ENCODE measurements at regions of chr17 and their contacts with region 1.

Region 1: DNA sequence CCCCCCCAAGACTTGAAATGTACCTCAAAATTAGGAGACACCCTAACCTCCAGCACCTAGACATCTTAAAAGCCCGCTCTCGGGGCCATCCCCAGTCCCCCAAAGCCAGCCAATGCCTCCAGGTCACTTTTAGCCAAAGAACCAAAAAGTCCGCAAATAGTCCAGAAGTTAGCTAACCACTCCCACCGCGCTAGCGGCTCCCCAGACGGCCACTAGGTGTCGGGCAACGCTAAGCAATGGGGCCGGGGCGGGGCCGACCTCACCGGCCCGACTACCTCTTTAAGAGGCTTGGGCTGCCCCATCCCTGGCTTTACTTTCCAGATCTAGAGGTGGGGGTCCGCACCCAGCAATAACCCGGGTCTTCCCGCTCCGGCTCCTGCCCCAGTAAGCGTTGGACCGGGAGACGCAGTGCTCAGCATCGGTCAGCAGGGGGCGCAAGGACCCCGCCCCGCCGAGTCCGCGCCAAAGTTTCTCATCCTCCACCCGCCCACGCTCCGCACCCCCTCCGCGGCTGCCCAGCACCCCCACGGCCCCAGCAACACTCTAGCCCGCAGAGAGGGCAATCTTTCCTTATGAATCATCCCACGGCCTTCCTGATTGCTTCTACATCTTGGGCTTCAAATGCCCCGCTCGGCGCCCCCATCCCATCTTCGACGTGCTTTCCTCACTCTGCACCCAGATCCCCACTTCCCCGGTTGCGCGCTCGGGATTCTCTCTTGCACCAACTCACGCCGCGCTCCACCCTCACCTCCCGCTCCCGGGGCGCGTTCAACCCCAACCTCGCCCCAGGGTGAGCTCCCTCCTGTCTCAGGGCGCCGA is 765 bp downstream of the COL1A1 start:
- DNase-seq: peak; percentile 70 to 83 (median 75)
- H3K4me3 ChIP-seq: peak overlapping the region; percentile 59
- H3K4me3 Mint-ChIP-seq: peak overlapping the region; percentile 75 to 90 (median 80)
- H3K27ac ChIP-seq: no peak overlapping the region
- H3K27ac Mint-ChIP-seq: peak overlapping the region in 7 of 8 donors; percentile 14 to 97 (median 87)
- H3K4me1 ChIP-seq: peaks cover 17% of the 10 kb centered on the region
- H3K4me1 Mint-ChIP-seq: peaks cover 16 to 29% (median 16%) of the 10 kb centered on the region in 3 donors
- H3K27me3 ChIP-seq: peaks cover 25% of the 10 kb centered on the region
- H3K27me3 Mint-ChIP-seq: peaks cover 45 to 51% of the 10 kb centered on the region in 2 donors

Region 2: DNA sequence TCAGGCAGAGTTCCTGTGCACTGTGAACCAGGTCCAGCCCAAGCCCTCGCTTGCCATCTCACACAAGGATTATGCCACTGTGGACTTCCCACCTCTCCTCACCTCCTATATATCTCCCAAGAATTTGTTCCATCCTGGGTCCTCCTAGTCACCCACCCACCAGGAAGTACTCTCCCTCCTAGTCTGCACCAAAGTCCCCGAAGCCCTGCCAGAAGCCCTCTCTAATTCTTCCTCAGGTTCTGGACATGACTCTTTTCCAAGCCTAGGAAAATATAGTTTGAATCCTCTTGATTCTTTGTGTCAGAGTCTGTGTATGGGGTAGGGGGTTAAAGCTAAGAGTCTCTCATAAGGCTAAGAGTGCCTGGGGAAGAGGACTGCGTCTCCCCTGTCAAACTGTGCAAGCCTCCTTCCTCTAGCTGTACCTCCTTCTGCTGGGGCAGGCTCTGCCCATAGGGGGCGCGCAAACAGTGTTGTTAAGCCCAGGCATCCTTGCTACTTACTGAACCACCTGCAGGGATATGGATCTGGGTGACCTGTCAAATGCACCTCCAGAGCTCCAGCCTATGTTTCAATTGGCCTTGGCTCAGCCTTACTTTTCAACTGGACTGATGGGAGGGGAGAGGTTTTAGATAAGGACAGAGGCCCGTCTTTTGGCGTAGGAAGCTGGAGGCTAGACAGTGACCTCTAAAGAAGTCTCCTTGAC is 248.3 kb before region 1 on chr17:
- CTCF ChIA-PET with region 1: no interaction called
- POLR2A ChIA-PET with region 1: no interaction called
- DNase-seq: peak; percentile 65 to 85 (median 69)
- H3K4me3 ChIP-seq: no peak overlapping the region
- H3K4me3 Mint-ChIP-seq: no peak overlapping the region
- H3K27ac ChIP-seq: no peak overlapping the region
- H3K27ac Mint-ChIP-seq: no peak overlapping the region
- H3K4me1 ChIP-seq: no peaks in the 10 kb centered on the region
- H3K4me1 Mint-ChIP-seq: no peaks in the 10 kb centered on the region
- H3K27me3 ChIP-seq: peaks cover 31% of the 10 kb centered on the region
- H3K27me3 Mint-ChIP-seq: peaks cover 39 to 77% of the 10 kb centered on the region in 2 donors

Region 3: GRCh38 chr17:50213026-50214022 is 12.7 kb after region 1 on chr17:
- CTCF ChIA-PET with region 1: interaction called, 43 read pairs
- POLR2A ChIA-PET with region 1: no interaction called
- DNase-seq: peak in 4 of 5 donors; percentile 13 to 66 (median 56)
- H3K4me3 ChIP-seq: no peak overlapping the region
- H3K4me3 Mint-ChIP-seq: no peak overlapping the region
- H3K27ac ChIP-seq: no peak overlapping the region
- H3K27ac Mint-ChIP-seq: peak overlapping the region in 4 of 8 donors; percentile 10 to 29 (median 19)
- H3K4me1 ChIP-seq: peaks cover 8% of the 10 kb centered on the region
- H3K4me1 Mint-ChIP-seq: peaks cover 6 to 12% (median 11%) of the 10 kb centered on the region in 3 donors
- H3K27me3 ChIP-seq: peaks cover 4% of the 10 kb centered on the region
- H3K27me3 Mint-ChIP-seq: peaks cover 17 to 48% of the 10 kb centered on the region in 2 donors

Region 4: GRCh38 chr17:50269477-50270434 is 69.1 kb after region 1 on chr17:
- CTCF ChIA-PET with region 1: interaction called, 59 read pairs
- POLR2A ChIA-PET with region 1: no interaction called
- DNase-seq: peak; percentile 26 to 63 (median 37)
- H3K4me3 ChIP-seq: no peak overlapping the region
- H3K4me3 Mint-ChIP-seq: no peak overlapping the region
- H3K27ac ChIP-seq: no peak overlapping the region
- H3K27ac Mint-ChIP-seq: no peak overlapping the region
- H3K4me1 ChIP-seq: peaks cover 4% of the 10 kb centered on the region
- H3K4me1 Mint-ChIP-seq: peaks cover 4 to 6% (median 6%) of the 10 kb centered on the region in 3 donors
- H3K27me3 ChIP-seq: peaks cover 5% of the 10 kb centered on the region
- H3K27me3 Mint-ChIP-seq: peaks cover 5 to 23% of the 10 kb centered on the region in 2 donors

Region 5: GRCh38 chr17:50283246-50283645 is 82.6 kb after region 1 on chr17:
- CTCF ChIA-PET with region 1: interaction called, 12 read pairs
- POLR2A ChIA-PET with region 1: no interaction called
- DNase-seq: no peak
- H3K4me3 ChIP-seq: no peak overlapping the region
- H3K4me3 Mint-ChIP-seq: no peak overlapping the region
- H3K27ac ChIP-seq: no peak overlapping the region
- H3K27ac Mint-ChIP-seq: peak overlapping the region in 1 of 8 donors; percentile 47
- H3K4me1 ChIP-seq: no peaks in the 10 kb centered on the region
- H3K4me1 Mint-ChIP-seq: peaks cover 0 to 4% (median 3%) of the 10 kb centered on the region in 3 donors
- H3K27me3 ChIP-seq: no peaks in the 10 kb centered on the region
- H3K27me3 Mint-ChIP-seq: peaks cover 20 to 58% of the 10 kb centered on the region in 2 donors

Region 6: GRCh38 chr17:50297407-50297865 is 96.8 kb after region 1 on chr17:
- CTCF ChIA-PET with region 1: interaction called, 82 read pairs
- POLR2A ChIA-PET with region 1: no interaction called
- DNase-seq: peak; percentile 65 to 84 (median 66)
- H3K4me3 ChIP-seq: no peak overlapping the region
- H3K4me3 Mint-ChIP-seq: no peak overlapping the region
- H3K27ac ChIP-seq: no peak overlapping the region
- H3K27ac Mint-ChIP-seq: peak overlapping the region in 1 of 8 donors; percentile 43
- H3K4me1 ChIP-seq: no peaks in the 10 kb centered on the region
- H3K4me1 Mint-ChIP-seq: no peaks in the 10 kb centered on the region
- H3K27me3 ChIP-seq: peaks cover 9% of the 10 kb centered on the region
- H3K27me3 Mint-ChIP-seq: peaks cover 12 to 19% of the 10 kb centered on the region in 2 donors

Region 7: DNA sequence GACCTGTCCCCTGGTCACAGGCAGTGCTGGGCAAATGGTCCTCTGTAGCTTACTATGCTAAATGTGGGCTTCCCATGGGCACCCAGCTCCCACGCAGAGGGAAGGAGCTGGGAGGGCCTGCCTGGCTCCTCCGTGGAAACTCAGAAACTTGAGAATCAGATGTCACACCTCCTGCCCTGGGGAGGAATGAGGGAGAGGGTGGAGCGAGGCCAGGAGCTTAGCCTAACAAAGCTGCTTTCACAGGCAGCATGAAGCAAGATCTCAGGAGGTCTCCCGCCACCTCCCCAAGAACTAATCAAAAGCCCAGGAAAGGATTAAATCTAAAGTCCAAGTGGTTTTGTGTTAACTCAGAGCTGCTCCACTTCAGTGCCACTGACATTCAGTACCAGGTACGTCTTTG is 111.6 kb after region 1 on chr17:
- CTCF ChIA-PET with region 1: no interaction called
- POLR2A ChIA-PET with region 1: no interaction called
- DNase-seq: no peak
- H3K4me3 ChIP-seq: no peak overlapping the region
- H3K4me3 Mint-ChIP-seq: no peak overlapping the region
- H3K27ac ChIP-seq: no peak overlapping the region
- H3K27ac Mint-ChIP-seq: no peak overlapping the region
- H3K4me1 ChIP-seq: no peaks in the 10 kb centered on the region
- H3K4me1 Mint-ChIP-seq: no peaks in the 10 kb centered on the region
- H3K27me3 ChIP-seq: no peaks in the 10 kb centered on the region
- H3K27me3 Mint-ChIP-seq: peaks cover 10 to 48% of the 10 kb centered on the region in 2 donors

Region 8: DNA sequence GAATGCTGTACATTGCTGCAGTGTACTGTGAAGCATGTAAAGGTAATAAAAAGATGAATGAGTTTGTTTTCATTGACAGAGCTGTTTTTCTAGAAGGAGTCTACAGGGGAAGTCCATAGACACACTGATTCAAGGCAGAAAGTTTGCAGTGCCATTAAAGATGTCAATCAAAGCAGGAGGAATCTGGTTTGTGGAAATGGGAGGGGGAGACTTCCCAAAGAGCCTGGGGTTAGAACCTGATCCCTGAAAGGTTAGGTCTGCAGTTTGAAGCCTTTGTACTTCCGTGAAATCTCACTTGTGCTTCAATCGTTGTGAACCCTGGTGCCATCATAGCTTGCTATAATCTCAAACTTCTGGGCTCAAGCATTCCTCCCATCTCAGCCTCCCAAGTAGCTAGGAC is 230.6 kb after region 1 on chr17:
- CTCF ChIA-PET with region 1: no interaction called
- POLR2A ChIA-PET with region 1: no interaction called
- DNase-seq: no peak
- H3K4me3 ChIP-seq: no peak overlapping the region
- H3K4me3 Mint-ChIP-seq: no peak overlapping the region
- H3K27ac ChIP-seq: no peak overlapping the region
- H3K27ac Mint-ChIP-seq: no peak overlapping the region
- H3K4me1 ChIP-seq: peaks cover 14% of the 10 kb centered on the region
- H3K4me1 Mint-ChIP-seq: peaks cover 16 to 27% (median 16%) of the 10 kb centered on the region in 3 donors
- H3K27me3 ChIP-seq: no peaks in the 10 kb centered on the region
- H3K27me3 Mint-ChIP-seq: no peaks in the 10 kb centered on the region

Measured in CD8-positive, alpha-beta memory T cell (primary cell).